ENCODE measurements at regions of chr22 and their contacts with region 1.

Region 1: DNA sequence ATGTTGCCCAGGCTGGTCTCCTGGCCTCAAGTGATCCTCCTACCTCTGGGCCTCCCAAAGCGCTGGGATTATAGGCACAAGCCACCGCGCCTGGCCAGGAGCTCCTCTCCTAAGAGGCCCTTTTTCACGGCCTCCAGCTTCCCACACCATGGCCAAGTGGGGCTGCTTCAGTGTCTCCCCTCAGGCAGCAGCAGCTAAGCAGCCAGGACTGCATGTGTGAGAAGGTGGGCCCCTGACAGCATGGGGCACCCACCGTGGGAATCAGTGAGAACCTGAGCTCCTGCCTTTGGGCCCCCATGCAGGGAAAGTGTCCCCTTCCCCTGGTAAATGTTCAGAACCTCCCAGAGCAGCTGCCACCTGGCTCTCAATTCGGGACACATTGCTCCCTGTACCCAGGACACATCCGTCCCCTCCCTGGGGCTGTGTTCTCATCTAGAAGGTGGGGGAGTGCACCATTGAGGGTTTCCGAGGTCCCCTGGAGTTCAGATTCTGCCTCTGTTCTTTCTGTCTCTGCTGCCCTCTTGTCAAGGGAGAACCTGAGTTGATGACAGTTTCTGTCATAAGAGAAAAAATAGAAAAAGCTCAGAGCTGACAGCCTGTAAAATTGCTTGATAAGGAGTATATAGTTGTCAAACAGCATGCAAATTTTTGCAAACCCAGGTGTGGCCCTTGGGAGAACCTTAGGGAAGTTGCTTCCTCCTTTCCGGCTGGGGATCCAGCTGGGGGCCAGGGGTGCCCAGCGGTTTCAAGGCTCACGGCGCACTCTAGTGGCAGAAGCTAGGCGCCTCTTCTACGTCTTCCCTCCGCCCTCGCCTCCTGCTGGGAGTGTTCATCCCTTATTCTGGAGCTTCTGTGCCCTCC is 29.7 kb downstream of the FAM83F start:
- DNase-seq: peak; percentile 75
- H3K4me3 Mint-ChIP-seq: no peak overlapping the region
- H3K27ac Mint-ChIP-seq: no peak overlapping the region
- H3K4me1 Mint-ChIP-seq: no peaks in the 10 kb centered on the region
- H3K27me3 Mint-ChIP-seq: no peaks in the 10 kb centered on the region

Region 2: GRCh38 chr22:39543095-39543494 is 481.3 kb before region 1 on chr22:
- CTCF ChIA-PET with region 1: interaction called, 20 read pairs
- intact Hi-C with region 1: no loop called
- DNase-seq: peak; percentile 59
- H3K4me3 Mint-ChIP-seq: no peak overlapping the region
- H3K27ac Mint-ChIP-seq: no peak overlapping the region
- H3K4me1 Mint-ChIP-seq: peaks cover 10% of the 10 kb centered on the region
- H3K27me3 Mint-ChIP-seq: peaks cover 25% of the 10 kb centered on the region

Region 3: GRCh38 chr22:39622881-39623367 is 401.5 kb before region 1 on chr22:
- CTCF ChIA-PET with region 1: interaction called, 7 read pairs
- intact Hi-C with region 1: loop called (anchors 2 kb)
- DNase-seq: peak; percentile 82
- H3K4me3 Mint-ChIP-seq: no peak overlapping the region
- H3K27ac Mint-ChIP-seq: no peak overlapping the region
- H3K4me1 Mint-ChIP-seq: peaks cover 4% of the 10 kb centered on the region
- H3K27me3 Mint-ChIP-seq: no peaks in the 10 kb centered on the region

Region 4: GRCh38 chr22:39900306-39901227 is 123.9 kb before region 1 on chr22 and contains the start of gene GRAP2:
- CTCF ChIA-PET with region 1: interaction called, 10 read pairs
- intact Hi-C with region 1: loop called (anchors 10 kb)
- DNase-seq: peak; percentile 82
- H3K4me3 Mint-ChIP-seq: peak within 1 kb of the TSS; percentile 90
- H3K27ac Mint-ChIP-seq: peak within 1 kb of the TSS; percentile 100
- H3K4me1 Mint-ChIP-seq: peaks cover 18% of the 10 kb centered on the region
- H3K27me3 Mint-ChIP-seq: no peaks in the 10 kb centered on the region
- total RNA-seq, gene GRAP2: 25.5 to 29.4 TPM

Region 5: GRCh38 chr22:39932918-39933649 is 91.3 kb before region 1 on chr22:
- CTCF ChIA-PET with region 1: interaction called, 23 read pairs
- intact Hi-C with region 1: no loop called
- DNase-seq: peak; percentile 81
- H3K4me3 Mint-ChIP-seq: peak overlapping the region; percentile 78
- H3K27ac Mint-ChIP-seq: no peak overlapping the region
- H3K4me1 Mint-ChIP-seq: peaks cover 48% of the 10 kb centered on the region
- H3K27me3 Mint-ChIP-seq: no peaks in the 10 kb centered on the region

Region 6: GRCh38 chr22:39946503-39947219 is 77.8 kb before region 1 on chr22:
- CTCF ChIA-PET with region 1: interaction called, 20 read pairs
- intact Hi-C with region 1: loop called (anchors 2 kb)
- DNase-seq: no peak
- H3K4me3 Mint-ChIP-seq: peak overlapping the region; percentile 53
- H3K27ac Mint-ChIP-seq: peak overlapping the region; percentile 95
- H3K4me1 Mint-ChIP-seq: peaks cover 99% of the 10 kb centered on the region
- H3K27me3 Mint-ChIP-seq: no peaks in the 10 kb centered on the region

Region 7: DNA sequence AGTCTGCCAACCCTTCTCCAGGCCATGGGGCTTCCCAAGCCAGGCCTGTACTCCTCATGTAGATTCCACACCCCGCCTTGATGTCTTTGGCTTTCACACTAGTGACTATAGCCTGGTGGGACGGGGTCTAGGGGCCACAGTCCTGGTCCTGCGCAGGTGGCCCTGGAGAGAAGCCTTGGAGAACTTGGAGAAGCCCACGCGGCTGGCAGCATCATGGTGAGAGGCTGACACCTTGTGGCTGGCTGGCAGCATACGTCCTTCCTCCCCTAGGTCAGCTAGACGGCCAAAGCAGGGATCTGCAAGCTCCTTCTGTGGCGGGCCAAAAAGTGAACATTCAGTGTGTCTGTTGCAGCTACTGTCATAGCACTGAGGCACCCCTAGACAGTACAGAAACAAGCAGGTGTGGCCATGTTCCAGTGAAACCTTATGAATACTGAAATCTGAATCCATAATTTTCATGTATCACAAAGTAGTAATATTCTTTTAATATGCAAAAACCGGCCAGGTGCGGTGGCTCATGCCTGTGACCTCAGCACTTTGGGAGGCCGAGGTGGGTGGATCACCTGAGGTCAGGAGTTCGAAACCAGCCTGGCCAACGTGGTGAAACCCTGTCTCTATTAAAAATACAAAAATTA is 12.3 kb after region 1 on chr22:
- CTCF ChIA-PET with region 1: interaction called, 29 read pairs
- intact Hi-C with region 1: no loop called
- DNase-seq: peak; percentile 71
- H3K4me3 Mint-ChIP-seq: no peak overlapping the region
- H3K27ac Mint-ChIP-seq: no peak overlapping the region
- H3K4me1 Mint-ChIP-seq: no peaks in the 10 kb centered on the region
- H3K27me3 Mint-ChIP-seq: no peaks in the 10 kb centered on the region

Region 8: GRCh38 chr22:40258017-40258416 is 233.6 kb after region 1 on chr22:
- CTCF ChIA-PET with region 1: no interaction called
- intact Hi-C with region 1: no loop called
- DNase-seq: no peak
- H3K4me3 Mint-ChIP-seq: no peak overlapping the region
- H3K27ac Mint-ChIP-seq: peak overlapping the region; percentile 66
- H3K4me1 Mint-ChIP-seq: peaks cover 58% of the 10 kb centered on the region
- H3K27me3 Mint-ChIP-seq: no peaks in the 10 kb centered on the region